ENCODE measurements at regions of chr16 and their contacts with region 1.

Region 1: GRCh38 chr16:85610508-85611332 is 2.4 kb upstream of the GSE1 start:
- ATAC-seq: peak; percentile 13 to 57 (median 38)
- H3K4me3 ChIP-seq: peak overlapping the region; percentile 44 to 75 (median 61)
- H3K27ac ChIP-seq: peak overlapping the region; percentile 96 to 98
- H3K4me1 ChIP-seq: peaks cover 62 to 71% of the 10 kb centered on the region in 2 donors

Region 2: GRCh38 chr16:85253084-85253941 is 357.4 kb before region 1 on chr16:
- in situ Hi-C with region 1: loop called in 2 of 9 experiments (anchors 25 kb)
- ATAC-seq: peak; percentile 87 to 97 (median 88)
- H3K4me3 ChIP-seq: no peak overlapping the region
- H3K27ac ChIP-seq: no peak overlapping the region
- H3K4me1 ChIP-seq: peaks cover 29 to 35% of the 10 kb centered on the region in 2 donors

Region 3: DNA sequence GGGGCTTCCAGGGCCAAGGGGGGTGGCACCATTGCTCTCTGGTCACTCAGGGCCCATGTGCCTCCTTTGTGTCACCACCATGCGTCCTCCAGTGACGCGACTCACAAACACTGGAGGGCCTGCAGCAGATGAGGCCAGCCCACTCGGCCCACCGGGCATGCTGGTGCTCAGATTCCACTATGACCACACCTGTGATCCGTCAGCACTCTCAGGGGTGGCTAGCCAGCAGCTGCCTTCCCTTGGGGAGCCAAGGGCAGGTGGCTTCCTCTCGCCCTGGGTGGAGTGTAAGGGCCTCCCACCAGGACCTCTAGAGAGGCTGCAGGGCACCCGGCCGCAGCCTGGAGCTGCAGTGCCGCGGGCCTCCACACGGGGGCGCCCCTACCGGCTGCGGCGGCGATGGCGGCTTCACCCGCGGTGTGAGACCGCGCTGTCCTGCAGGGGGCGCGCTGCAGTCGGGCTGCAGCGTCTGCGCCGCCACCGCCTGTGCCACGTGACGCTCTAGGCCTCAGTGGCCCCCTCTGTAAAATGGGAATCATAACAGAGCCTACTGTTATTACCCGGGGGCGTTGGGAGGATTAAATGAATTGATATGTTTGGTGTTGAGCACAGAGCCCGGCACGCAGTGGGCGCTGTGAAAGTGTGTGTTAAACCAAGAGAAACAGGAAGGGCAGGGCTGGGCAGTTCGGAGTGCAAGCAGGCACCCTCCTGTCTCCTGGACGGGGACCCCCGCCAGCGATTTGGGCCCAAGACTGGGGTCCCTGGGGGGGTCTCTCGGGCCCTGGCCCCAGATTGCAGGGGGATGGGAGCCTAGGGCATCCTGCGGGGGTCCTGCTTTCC is 190.0 kb before region 1 on chr16:
- in situ Hi-C with region 1: loop called in 1 of 9 experiments (anchors 25 kb)
- ATAC-seq: peak in 3 of 8 experiments; percentile 12 to 58 (median 22)
- H3K4me3 ChIP-seq: no peak overlapping the region
- H3K27ac ChIP-seq: no peak overlapping the region
- H3K4me1 ChIP-seq: peaks cover 67% of the 10 kb centered on the region in 2 donors

Region 4: GRCh38 chr16:85479972-85480751 is 130.6 kb before region 1 on chr16:
- in situ Hi-C with region 1: no loop called
- ATAC-seq: peak in 5 of 8 experiments; percentile 16 to 52 (median 38)
- H3K4me3 ChIP-seq: no peak overlapping the region
- H3K27ac ChIP-seq: peak overlapping the region in 1 of 2 donors; percentile 11
- H3K4me1 ChIP-seq: peaks cover 24 to 49% of the 10 kb centered on the region in 2 donors

Region 5: DNA sequence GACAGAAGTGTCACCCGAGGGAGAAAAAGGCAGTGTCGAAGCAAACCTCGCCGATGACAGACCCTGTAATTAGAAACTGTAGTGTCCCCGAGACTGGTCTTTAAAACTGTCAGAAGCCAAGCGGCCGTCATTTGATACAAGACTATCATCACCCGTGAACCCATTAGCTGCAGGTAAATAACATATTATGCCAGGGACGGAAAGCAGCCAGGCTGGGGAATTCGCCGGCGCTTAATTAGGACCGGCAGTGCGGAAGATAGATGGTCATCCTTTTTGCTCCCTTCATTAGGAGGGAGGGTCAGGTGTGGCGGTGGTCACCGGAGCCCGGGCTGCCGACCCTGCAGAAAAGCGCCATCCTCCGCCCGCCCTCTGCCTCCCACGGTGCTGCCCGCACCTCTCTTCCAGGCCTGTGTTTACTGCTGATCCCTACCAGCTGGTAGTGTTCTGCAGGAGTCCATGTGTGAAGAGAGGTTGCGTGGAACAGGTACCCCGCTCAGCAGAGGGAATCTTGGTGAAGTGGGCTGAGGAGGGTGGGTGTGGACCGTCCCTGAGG is 107.0 kb before region 1 on chr16:
- in situ Hi-C with region 1: no loop called
- ATAC-seq: peak in 4 of 8 experiments; percentile 8 to 37 (median 18)
- H3K4me3 ChIP-seq: no peak overlapping the region
- H3K27ac ChIP-seq: peak overlapping the region in 1 of 2 donors; percentile 24
- H3K4me1 ChIP-seq: peaks cover 51 to 85% of the 10 kb centered on the region in 2 donors

Region 6: DNA sequence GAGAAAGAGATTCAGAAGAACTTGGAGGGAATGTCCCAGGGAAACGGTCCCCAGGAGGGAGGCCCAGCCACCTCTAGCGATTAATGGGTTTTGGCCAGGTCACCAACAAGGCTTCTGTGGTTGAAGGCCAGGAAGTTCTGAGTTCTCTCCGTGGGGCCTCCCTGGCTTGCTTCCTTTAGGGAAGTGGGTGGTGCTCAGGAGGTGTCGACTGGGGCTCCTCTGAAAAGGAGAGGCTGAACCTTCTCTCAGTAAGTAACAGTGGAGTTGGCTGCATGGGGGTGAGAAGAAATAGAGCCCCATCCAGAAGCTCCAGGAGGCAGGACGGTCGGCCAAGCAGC is 74.7 kb before region 1 on chr16:
- in situ Hi-C with region 1: no loop called
- ATAC-seq: peak in 2 of 8 experiments; percentile 46 to 48
- H3K4me3 ChIP-seq: no peak overlapping the region
- H3K27ac ChIP-seq: no peak overlapping the region
- H3K4me1 ChIP-seq: peaks cover 29 to 37% of the 10 kb centered on the region in 2 donors

Measured in motor neuron (in vitro differentiated cells).